KBM-7 (cell line): ENCODE measurements at regions of chr1 and their contacts with region 1.

Region 1: DNA sequence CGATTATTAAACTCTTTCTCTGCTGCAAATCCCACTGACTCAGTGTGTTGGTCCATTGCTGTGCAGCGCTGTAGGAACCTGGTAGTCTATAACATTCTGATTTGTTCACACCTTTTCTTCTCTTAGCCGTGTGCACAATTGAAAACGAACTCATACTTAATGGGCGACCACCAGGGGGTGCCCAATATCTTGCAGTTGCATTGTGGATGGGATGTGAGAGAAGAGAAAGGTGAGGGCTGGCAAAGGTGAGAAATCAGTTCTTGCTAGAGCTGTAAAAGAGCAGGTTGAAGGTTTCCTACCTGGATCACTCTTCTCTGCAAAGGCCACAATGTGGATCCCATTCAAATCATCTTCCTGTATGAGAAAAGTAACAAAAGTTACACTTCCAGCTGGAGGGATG is 51.0 kb downstream of the CASQ2 start:
- DNase-seq: peak; percentile 56

Region 2: DNA sequence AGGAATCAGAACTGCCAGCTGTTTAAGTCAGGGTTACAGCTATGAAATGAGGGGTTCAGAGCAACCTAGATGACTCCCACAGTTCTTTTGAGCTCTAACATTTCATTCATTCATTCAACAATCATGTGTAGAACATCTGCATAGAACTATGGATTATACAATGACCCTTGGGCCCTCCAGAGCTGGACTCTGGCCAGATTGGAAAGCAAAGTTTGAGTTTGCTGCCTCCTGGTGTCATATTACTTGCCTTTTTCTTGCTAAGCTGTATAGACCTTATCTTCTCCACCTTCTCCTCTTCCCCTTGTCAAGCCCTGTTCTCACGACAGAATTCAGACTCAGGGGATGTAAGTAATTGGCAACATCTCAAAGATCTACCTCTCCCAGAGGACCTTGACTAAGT is 47.0 kb after region 1 on chr1:
- in situ Hi-C with region 1: loop called (anchors 10 kb)
- DNase-seq: peak; percentile 31